Posterior vena cava (tissue), 2 donors: ENCODE measurements at regions of chr13 and their contacts with region 1.

Region 1: GRCh38 chr13:19053561-19053960 is 128.1 kb downstream of the TUBA3C start:
- DNase-seq: no peak

Region 2: GRCh38 chr13:18906681-18907080 is 146.9 kb before region 1 on chr13:
- intact Hi-C with region 1: no loop called
- DNase-seq: no peak

Region 3: DNA sequence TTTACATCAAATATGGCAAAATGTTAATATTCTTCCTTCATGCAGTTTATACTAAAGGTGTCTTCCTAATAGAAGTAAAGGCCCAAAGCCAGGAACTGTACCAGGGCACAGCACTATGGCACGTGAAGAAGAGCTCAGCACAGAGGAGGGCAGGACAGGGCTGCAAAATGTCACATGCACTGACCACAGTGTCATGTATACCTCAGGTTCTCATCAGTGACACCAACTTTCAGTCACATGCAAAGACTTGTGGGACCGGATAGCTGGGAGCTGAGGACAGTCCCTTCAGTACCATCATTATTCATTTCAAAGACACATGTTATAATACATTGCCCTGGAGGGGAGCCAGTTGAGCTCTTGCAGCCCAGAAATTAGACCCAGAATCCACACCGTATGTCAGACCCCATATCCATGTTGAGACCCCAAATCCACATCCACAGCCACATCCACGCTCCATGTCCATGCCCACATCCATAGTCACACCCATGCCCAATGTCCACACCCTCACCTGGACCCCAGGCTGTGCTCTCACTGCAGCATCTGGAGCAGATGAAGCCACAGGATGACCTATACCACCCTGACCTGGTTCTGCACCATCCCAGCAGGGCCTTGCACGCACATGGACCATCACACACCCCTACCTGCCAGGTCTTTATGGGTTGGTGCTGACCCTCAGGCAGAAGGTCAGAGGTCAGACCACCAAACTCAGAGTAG is 16.3 kb after region 1 on chr13:
- intact Hi-C with region 1: loop called in 1 of 2 experiments (anchors 1 kb)
- DNase-seq: no peak

Region 4: GRCh38 chr13:19329365-19329764 is 275.8 kb after region 1 on chr13:
- intact Hi-C with region 1: no loop called
- DNase-seq: no peak

Region 5: GRCh38 chr13:19845758-19846157 is 792.2 kb after region 1 on chr13:
- intact Hi-C with region 1: no loop called
- DNase-seq: no peak